Ascending aorta (tissue), 2 donors: ENCODE measurements at regions of chr6 and their contacts with region 1.

Region 1: DNA sequence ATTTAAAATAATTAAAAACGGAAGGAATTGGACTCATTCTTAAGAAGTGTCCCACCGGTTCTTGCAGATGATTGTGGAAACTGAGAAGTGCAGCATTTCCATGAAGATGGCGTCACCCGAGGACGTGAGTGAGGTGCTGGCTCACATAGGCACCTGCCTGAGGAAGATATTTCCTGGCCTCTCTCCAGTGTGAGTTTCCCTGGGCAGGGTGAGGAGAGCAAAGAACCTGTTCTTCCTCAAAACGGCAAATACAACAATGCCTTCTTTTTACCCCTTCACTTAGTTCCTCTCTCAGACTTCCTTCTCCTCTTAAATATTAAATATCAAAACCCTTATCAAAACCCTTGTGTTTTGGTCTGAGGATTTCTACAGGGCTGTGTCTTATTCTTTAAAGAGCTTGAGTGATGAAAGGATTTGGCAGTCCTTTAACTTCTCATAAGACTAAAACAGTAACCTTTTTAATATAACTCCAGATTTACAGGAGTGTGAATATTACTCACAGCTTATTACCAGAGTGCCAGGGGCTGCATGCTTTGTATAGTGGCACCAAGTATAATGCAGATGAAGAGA is 156.3 kb downstream of the CARMIL1 start:
- DNase-seq: no peak
- H3K4me3 ChIP-seq: no peak overlapping the region
- H3K27ac ChIP-seq: no peak overlapping the region
- H3K4me1 ChIP-seq: no peaks in the 10 kb centered on the region
- H3K27me3 ChIP-seq: no peaks in the 10 kb centered on the region
- CTCF ChIP-seq: no peak

Region 2: GRCh38 chr6:25472306-25472705 is 36.8 kb after region 1 on chr6:
- intact Hi-C with region 1: loop called (anchors 5 kb)
- DNase-seq: no peak
- H3K4me3 ChIP-seq: no peak overlapping the region
- H3K27ac ChIP-seq: no peak overlapping the region
- H3K4me1 ChIP-seq: peaks cover 0 to 4% of the 10 kb centered on the region in 2 donors
- H3K27me3 ChIP-seq: no peaks in the 10 kb centered on the region
- CTCF ChIP-seq: no peak

Region 3: DNA sequence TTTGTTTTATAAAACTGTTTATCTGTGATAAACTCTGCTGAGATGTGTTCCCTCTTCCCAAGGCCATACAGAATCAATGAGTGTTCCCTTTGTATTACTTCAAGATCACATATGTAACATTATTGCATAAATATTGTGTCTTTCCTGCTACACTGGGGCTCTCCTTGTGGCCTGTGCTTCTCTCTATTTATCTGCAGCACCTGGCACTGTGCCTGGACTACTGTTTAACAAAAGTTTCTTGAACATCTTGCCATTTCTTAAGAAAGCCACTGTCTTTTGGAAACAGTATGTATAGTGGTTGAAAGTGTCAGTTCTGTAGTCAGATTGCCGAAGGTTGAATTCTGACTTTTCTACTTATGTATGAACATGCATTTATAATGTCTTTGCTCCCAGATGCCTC is 47.5 kb after region 1 on chr6:
- intact Hi-C with region 1: no loop called
- DNase-seq: no peak
- H3K4me3 ChIP-seq: no peak overlapping the region
- H3K27ac ChIP-seq: no peak overlapping the region
- H3K4me1 ChIP-seq: peaks cover 0 to 3% of the 10 kb centered on the region in 2 donors
- H3K27me3 ChIP-seq: no peaks in the 10 kb centered on the region
- CTCF ChIP-seq: no peak

Region 4: DNA sequence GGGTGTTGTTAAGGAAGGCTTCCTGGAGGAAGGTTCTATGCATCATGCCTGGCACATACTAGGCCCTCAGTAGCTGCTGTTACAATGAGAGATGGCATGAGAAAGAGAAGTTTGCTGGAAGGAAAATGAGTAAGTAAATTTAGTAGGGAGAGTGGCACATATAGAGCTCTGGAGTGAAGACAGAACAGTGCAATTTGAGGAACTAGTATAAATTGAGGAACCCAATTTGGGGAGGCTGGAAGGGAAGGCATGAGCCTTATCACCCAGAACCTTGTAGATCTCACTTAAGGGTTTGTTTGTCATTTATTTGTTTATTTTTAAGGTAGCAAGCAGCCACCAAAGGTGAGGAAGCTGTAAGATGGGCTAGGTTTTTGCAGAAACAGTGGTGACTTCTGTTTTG is 129.4 kb after region 1 on chr6:
- intact Hi-C with region 1: no loop called
- DNase-seq: no peak
- H3K4me3 ChIP-seq: no peak overlapping the region
- H3K27ac ChIP-seq: no peak overlapping the region
- H3K4me1 ChIP-seq: no peaks in the 10 kb centered on the region
- H3K27me3 ChIP-seq: no peaks in the 10 kb centered on the region
- CTCF ChIP-seq: no peak